MCF 10A (cell line): ENCODE measurements at regions of chr9 and their contacts with region 1.

Region 1: GRCh38 chr9:78035383-78035993 is 3.9 kb upstream of the GNAQ start:
- DNase-seq: peak; percentile 84
- H3K4me3 Mint-ChIP-seq: no peak overlapping the region
- H3K27ac Mint-ChIP-seq: no peak overlapping the region
- H3K4me1 Mint-ChIP-seq: peaks cover 16% of the 10 kb centered on the region
- H3K27me3 Mint-ChIP-seq: no peaks in the 10 kb centered on the region
- CTCF ChIP-seq: peak; percentile 62

Region 2: GRCh38 chr9:77417566-77417965 is 617.9 kb before region 1 on chr9:
- CTCF ChIA-PET with region 1: no interaction called
- POLR2A ChIA-PET with region 1: no interaction called
- intact Hi-C with region 1: no loop called
- DNase-seq: peak; percentile 84
- H3K4me3 Mint-ChIP-seq: no peak overlapping the region
- H3K27ac Mint-ChIP-seq: peak overlapping the region; percentile 91
- H3K4me1 Mint-ChIP-seq: peaks cover 21% of the 10 kb centered on the region
- H3K27me3 Mint-ChIP-seq: no peaks in the 10 kb centered on the region
- CTCF ChIP-seq: no peak

Region 3: DNA sequence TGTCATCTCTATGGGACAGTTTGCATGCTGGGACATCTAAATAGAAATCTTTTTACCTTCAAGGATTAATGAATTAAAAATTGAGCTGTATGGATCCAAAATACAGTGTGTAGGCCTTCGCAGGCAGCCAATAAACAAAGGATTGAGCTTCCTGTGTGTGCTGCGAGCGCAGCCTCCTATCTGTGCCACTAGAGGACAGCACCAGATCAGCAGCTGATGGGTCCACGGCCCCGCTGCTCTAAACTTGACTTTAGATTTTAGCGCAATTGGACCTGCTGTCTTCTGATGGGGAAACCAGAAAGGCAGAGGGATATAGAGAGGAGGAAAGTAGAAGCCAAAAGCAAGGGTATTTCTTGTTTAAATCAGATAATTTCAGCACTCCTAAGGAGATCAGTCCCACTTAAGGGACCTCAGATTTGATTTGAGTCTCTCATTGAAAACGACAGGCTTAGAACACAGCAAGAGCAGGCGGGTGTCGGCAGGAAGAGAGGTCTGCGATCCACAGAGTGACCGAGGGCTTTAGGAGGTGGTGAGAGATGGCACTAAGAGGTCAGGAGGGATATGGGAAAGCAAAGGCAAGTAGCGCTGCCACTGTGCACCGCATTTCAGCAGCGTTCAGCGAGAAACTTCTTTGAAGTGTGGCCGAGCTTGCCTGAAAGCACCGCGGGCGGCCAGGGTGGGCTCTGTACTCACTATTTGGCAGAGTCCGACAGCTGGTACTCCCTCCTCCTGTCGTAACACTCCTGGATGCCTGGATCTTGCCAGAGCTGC is 601.6 kb before region 1 on chr9:
- CTCF ChIA-PET with region 1: interaction called, 10 read pairs
- POLR2A ChIA-PET with region 1: no interaction called
- intact Hi-C with region 1: loop called (anchors 1 kb)
- DNase-seq: peak; percentile 61
- H3K4me3 Mint-ChIP-seq: no peak overlapping the region
- H3K27ac Mint-ChIP-seq: no peak overlapping the region
- H3K4me1 Mint-ChIP-seq: peaks cover 4% of the 10 kb centered on the region
- H3K27me3 Mint-ChIP-seq: no peaks in the 10 kb centered on the region
- CTCF ChIP-seq: peak; percentile 98

Region 4: GRCh38 chr9:77544546-77544945 is 490.9 kb before region 1 on chr9:
- CTCF ChIA-PET with region 1: no interaction called
- POLR2A ChIA-PET with region 1: no interaction called
- intact Hi-C with region 1: no loop called
- DNase-seq: no peak
- H3K4me3 Mint-ChIP-seq: no peak overlapping the region
- H3K27ac Mint-ChIP-seq: no peak overlapping the region
- H3K4me1 Mint-ChIP-seq: no peaks in the 10 kb centered on the region
- H3K27me3 Mint-ChIP-seq: peaks cover 19% of the 10 kb centered on the region
- CTCF ChIP-seq: no peak

Region 5: GRCh38 chr9:77751341-77752091 is 284.0 kb before region 1 on chr9:
- CTCF ChIA-PET with region 1: interaction called, 5 read pairs
- POLR2A ChIA-PET with region 1: no interaction called
- intact Hi-C with region 1: loop called (anchors 1 kb)
- DNase-seq: peak; percentile 58
- H3K4me3 Mint-ChIP-seq: no peak overlapping the region
- H3K27ac Mint-ChIP-seq: no peak overlapping the region
- H3K4me1 Mint-ChIP-seq: peaks cover 16% of the 10 kb centered on the region
- H3K27me3 Mint-ChIP-seq: no peaks in the 10 kb centered on the region
- CTCF ChIP-seq: peak; percentile 39

Region 6: DNA sequence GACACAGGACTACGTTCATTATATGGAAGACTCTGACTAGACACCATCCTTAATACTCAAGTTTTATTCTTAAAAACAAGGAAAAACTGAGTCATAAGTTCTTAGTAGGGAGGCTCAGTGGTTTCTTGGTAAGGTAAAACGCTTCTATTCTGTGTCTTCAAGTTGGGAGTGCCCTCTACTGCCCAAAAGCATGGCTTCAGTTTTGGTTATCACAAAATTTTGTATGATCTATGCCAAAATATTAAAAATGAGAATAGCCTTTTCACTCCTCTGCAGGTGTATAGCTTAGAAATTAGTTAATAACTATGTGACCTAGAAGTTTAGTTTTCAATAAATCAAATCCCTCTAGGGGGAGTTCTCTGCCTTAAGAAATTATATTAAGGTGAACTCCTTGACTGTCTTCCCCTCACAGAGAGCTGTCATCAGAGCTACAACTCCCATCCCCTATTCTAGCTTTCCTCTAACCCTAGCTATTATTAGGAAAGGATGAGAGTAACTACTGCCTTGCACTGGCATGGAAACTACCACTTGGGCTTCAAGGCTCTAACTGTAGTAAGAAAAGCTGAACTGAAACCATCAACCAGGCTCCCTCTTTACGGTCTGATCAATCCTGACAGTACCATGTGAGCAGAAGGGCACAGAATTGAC is 193.6 kb before region 1 on chr9:
- CTCF ChIA-PET with region 1: interaction called, 25 read pairs
- POLR2A ChIA-PET with region 1: interaction called, 3 read pairs
- intact Hi-C with region 1: no loop called
- DNase-seq: no peak
- H3K4me3 Mint-ChIP-seq: no peak overlapping the region
- H3K27ac Mint-ChIP-seq: no peak overlapping the region
- H3K4me1 Mint-ChIP-seq: peaks cover 13% of the 10 kb centered on the region
- H3K27me3 Mint-ChIP-seq: no peaks in the 10 kb centered on the region
- CTCF ChIP-seq: peak; percentile 29

Region 7: DNA sequence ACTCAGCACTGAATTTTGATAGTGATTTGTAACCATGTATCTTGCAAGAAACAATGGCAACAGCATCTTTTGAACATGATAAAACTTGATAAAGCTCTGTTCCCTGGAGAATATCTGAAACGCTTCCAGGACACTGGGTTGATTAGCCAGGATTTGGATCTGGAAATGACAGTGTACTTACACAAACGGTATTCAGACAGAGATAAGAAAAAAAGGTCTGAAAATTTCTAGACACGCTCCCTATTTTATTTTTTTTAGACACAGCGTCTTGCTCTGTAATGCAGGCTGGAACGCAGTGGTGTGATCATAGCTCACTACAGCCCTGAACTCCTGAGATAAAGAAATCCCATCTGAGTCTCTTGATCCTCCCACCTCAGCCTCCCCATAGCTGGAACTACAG is 112.9 kb before region 1 on chr9:
- CTCF ChIA-PET with region 1: interaction called, 11 read pairs
- POLR2A ChIA-PET with region 1: interaction called, 4 read pairs
- intact Hi-C with region 1: no loop called
- DNase-seq: no peak
- H3K4me3 Mint-ChIP-seq: no peak overlapping the region
- H3K27ac Mint-ChIP-seq: no peak overlapping the region
- H3K4me1 Mint-ChIP-seq: peaks cover 24% of the 10 kb centered on the region
- H3K27me3 Mint-ChIP-seq: no peaks in the 10 kb centered on the region
- CTCF ChIP-seq: no peak

Region 8: GRCh38 chr9:78053627-78054026 is 18.1 kb after region 1 on chr9:
- CTCF ChIA-PET with region 1: interaction called, 37 read pairs
- POLR2A ChIA-PET with region 1: interaction called, 8 read pairs
- intact Hi-C with region 1: no loop called
- DNase-seq: no peak
- H3K4me3 Mint-ChIP-seq: no peak overlapping the region
- H3K27ac Mint-ChIP-seq: no peak overlapping the region
- H3K4me1 Mint-ChIP-seq: peaks cover 5% of the 10 kb centered on the region
- H3K27me3 Mint-ChIP-seq: peaks cover 36% of the 10 kb centered on the region
- CTCF ChIP-seq: no peak

Region 9: DNA sequence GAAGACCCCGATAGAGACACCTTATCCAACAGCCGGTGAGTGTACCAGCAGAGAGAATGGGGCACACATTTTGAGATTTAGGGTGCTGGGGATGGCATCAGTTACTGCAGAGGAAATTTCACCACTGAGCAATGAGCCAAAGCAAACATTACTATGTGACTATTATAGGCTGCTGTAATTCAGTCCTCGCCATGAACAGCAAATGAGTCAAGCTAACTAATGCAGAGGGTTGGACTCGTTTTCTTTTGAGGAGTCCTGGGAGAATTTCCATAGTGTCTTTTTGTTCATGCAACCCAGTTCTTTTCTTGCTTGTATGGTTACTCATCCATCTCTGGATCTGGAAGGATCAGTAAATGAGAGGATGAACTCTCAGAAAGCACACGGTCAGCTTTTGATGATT is 585.3 kb after region 1 on chr9:
- CTCF ChIA-PET with region 1: no interaction called
- POLR2A ChIA-PET with region 1: no interaction called
- intact Hi-C with region 1: no loop called
- DNase-seq: peak; percentile 59
- H3K4me3 Mint-ChIP-seq: no peak overlapping the region
- H3K27ac Mint-ChIP-seq: no peak overlapping the region
- H3K4me1 Mint-ChIP-seq: peaks cover 9% of the 10 kb centered on the region
- H3K27me3 Mint-ChIP-seq: no peaks in the 10 kb centered on the region
- CTCF ChIP-seq: no peak